ENCODE measurements at regions of chr2 and their contacts with region 1.

Region 1: DNA sequence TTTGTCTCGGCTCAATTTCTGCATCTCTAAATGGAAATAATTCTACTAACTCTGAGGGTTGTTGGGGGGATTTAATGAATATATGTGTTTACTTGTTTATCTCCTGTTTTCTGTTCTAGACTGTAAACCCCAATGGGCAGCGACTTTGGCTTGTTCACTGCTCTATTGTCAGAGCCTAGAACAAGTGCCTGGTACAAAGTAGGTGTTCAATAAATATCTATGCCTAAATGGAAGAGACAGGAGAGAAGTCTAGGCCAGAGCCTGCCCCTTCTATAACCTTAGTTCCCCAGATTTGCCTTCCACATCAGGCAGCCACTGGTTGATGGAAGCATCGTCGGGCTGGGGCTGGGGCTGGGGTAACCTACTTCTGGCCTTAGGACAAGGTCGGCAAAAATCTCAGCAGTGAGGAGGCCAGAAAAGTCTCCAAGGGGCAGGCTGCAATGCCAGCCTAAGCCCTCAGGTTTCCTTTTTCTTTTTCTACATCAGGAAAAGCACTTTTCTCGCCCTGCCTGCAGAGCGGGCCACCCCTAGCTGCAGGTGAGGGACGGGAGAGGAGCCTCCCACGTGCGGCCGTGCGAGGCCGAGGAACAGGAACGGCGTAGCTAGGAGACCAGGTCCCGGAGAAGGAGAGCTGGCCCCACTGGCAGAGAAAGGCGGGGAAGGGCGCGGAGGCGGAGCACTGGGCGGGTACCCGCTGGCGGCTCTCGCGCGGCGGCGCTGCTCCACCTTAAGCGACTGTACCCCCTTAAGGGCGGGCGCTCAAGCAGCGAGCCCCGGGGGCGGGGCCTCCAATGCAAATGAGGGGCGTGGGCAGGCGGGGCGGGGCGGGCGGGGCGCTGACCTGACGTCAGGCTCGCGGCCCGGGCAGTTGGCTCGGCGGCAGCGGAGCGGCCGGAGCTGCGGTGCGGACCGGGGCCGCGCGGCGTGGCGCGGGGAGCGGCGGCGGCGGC is at the start of gene CNNM4:
- DNase-seq: peak; percentile 85 to 93 (median 90)
- H3K4me3 ChIP-seq: peak within 1 kb of the TSS; percentile 91
- H3K4me3 Mint-ChIP-seq: peak within 1 kb of the TSS; percentile 86 to 94 (median 87)
- H3K27ac ChIP-seq: peak within 1 kb of the TSS; percentile 76
- H3K27ac Mint-ChIP-seq: peak within 1 kb of the TSS; percentile 85 to 96 (median 90)
- H3K4me1 ChIP-seq: peaks cover 53% of the 10 kb centered on the region
- H3K4me1 Mint-ChIP-seq: peaks cover 45 to 62% (median 54%) of the 10 kb centered on the region in 3 donors
- H3K27me3 ChIP-seq: no peaks in the 10 kb centered on the region
- H3K27me3 Mint-ChIP-seq: peaks cover 0 to 1% of the 10 kb centered on the region in 2 donors
- total RNA-seq, gene CNNM4: 6.9 to 7.2 TPM

Region 2: GRCh38 chr2:96739633-96740428 is 20.5 kb before region 1 on chr2 and contains the start of gene LMAN2L:
- CTCF ChIA-PET with region 1: interaction called, 11 read pairs
- POLR2A ChIA-PET with region 1: interaction called, 10 read pairs
- DNase-seq: peak; percentile 91 to 99 (median 96)
- H3K4me3 ChIP-seq: peak within 1 kb of the TSS; percentile 56
- H3K4me3 Mint-ChIP-seq: peak within 1 kb of the TSS; percentile 92 to 98 (median 96)
- H3K27ac ChIP-seq: peak within 1 kb of the TSS; percentile 82
- H3K27ac Mint-ChIP-seq: peak within 1 kb of the TSS; percentile 80 to 100 (median 96)
- H3K4me1 ChIP-seq: peaks cover 11% of the 10 kb centered on the region
- H3K4me1 Mint-ChIP-seq: peaks cover 32 to 53% (median 41%) of the 10 kb centered on the region in 3 donors
- H3K27me3 ChIP-seq: no peaks in the 10 kb centered on the region
- H3K27me3 Mint-ChIP-seq: peaks cover 0 to 1% of the 10 kb centered on the region in 2 donors
- total RNA-seq, gene LMAN2L: 9.4 to 9.9 TPM

Region 3: DNA sequence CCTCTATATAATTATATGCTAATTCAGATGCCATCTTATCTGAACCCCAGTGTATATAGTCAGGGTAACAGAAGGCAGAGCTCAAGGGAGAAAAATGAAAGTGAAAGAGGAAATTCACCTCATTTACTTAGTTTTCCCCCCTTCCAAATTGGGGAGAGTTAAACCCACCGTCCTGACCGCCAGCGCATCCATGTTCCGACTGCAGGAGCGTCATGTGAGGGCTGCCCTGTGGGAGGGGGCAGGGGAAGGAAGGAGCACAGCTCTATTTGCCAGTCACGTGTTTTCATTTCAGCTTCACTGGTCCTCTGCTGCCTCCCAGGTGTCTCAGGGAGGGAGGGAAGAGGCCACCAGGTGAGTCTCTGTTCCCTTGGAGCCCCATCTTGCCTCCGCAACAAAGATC is 13.6 kb after region 1 on chr2:
- CTCF ChIA-PET with region 1: interaction called, 36 read pairs
- POLR2A ChIA-PET with region 1: interaction called, 4 read pairs
- DNase-seq: peak; percentile 38 to 75 (median 63)
- H3K4me3 ChIP-seq: peak overlapping the region; percentile 59
- H3K4me3 Mint-ChIP-seq: peak overlapping the region; percentile 87 to 97 (median 93)
- H3K27ac ChIP-seq: peak overlapping the region; percentile 49
- H3K27ac Mint-ChIP-seq: peak overlapping the region; percentile 83 to 96 (median 94)
- H3K4me1 ChIP-seq: peaks cover 10% of the 10 kb centered on the region
- H3K4me1 Mint-ChIP-seq: peaks cover 25 to 36% (median 34%) of the 10 kb centered on the region in 3 donors
- H3K27me3 ChIP-seq: no peaks in the 10 kb centered on the region
- H3K27me3 Mint-ChIP-seq: peaks cover 0 to 2% of the 10 kb centered on the region in 2 donors

Region 4: DNA sequence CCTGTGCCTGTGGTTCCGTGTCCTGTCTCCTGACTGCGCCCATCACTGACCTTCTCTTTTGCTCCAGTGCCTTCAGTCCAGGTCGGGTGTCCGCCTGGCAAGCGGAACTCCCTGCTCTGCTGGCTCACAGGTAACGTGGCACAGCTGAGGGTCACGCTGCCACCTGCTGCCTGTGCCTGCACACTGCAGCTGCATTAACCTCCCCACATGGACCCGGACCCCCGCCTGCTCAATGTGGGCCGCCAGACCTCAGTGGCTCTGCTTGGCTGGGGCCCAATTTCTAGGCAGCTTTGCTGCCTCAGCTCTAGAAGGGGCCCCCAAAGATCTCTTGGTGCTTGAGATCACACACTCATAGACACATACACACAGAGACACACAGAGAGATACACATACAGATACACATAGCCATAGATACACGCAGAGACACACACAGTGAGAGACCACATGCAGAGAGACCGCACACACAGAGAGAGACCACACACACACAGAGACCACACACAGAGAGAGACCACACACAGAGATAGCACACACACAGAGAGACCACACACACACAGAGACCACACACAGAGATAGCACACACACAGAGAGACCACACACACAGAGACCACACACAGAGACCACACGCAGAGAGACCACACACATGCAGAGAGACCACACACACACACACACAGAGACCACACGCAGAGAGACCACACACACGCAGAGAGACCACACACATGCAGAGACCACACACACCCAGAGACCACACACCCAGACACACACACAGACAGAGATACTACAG is 40.9 kb after region 1 on chr2:
- CTCF ChIA-PET with region 1: interaction called, 21 read pairs
- POLR2A ChIA-PET with region 1: interaction called, 3 read pairs
- DNase-seq: peak; percentile 54 to 79 (median 59)
- H3K4me3 ChIP-seq: no peak overlapping the region
- H3K4me3 Mint-ChIP-seq: no peak overlapping the region
- H3K27ac ChIP-seq: no peak overlapping the region
- H3K27ac Mint-ChIP-seq: no peak overlapping the region
- H3K4me1 ChIP-seq: peaks cover 27% of the 10 kb centered on the region
- H3K4me1 Mint-ChIP-seq: peaks cover 3 to 10% (median 7%) of the 10 kb centered on the region in 3 donors
- H3K27me3 ChIP-seq: no peaks in the 10 kb centered on the region
- H3K27me3 Mint-ChIP-seq: no peaks in the 10 kb centered on the region

Region 5: GRCh38 chr2:96816128-96816835 is 56.0 kb after region 1 on chr2 and contains the start of gene CNNM3:
- CTCF ChIA-PET with region 1: interaction called, 14 read pairs
- POLR2A ChIA-PET with region 1: interaction called, 6 read pairs
- DNase-seq: peak; percentile 91 to 96 (median 94)
- H3K4me3 ChIP-seq: peak within 1 kb of the TSS; percentile 84
- H3K4me3 Mint-ChIP-seq: peak within 1 kb of the TSS; percentile 92 to 97 (median 96)
- H3K27ac ChIP-seq: peak within 1 kb of the TSS; percentile 69
- H3K27ac Mint-ChIP-seq: peak within 1 kb of the TSS; percentile 56 to 96 (median 94)
- H3K4me1 ChIP-seq: peaks cover 48% of the 10 kb centered on the region
- H3K4me1 Mint-ChIP-seq: peaks cover 60 to 76% (median 68%) of the 10 kb centered on the region in 3 donors
- H3K27me3 ChIP-seq: no peaks in the 10 kb centered on the region
- H3K27me3 Mint-ChIP-seq: peaks cover 0 to 1% of the 10 kb centered on the region in 2 donors
- total RNA-seq, gene CNNM3: 32.6 to 36.6 TPM

Region 6: GRCh38 chr2:96832754-96833507 is 72.6 kb after region 1 on chr2:
- CTCF ChIA-PET with region 1: no interaction called
- POLR2A ChIA-PET with region 1: no interaction called
- DNase-seq: no peak
- H3K4me3 ChIP-seq: no peak overlapping the region
- H3K4me3 Mint-ChIP-seq: no peak overlapping the region
- H3K27ac ChIP-seq: no peak overlapping the region
- H3K27ac Mint-ChIP-seq: peak overlapping the region in 3 of 8 donors; percentile 32 to 39 (median 36)
- H3K4me1 ChIP-seq: no peaks in the 10 kb centered on the region
- H3K4me1 Mint-ChIP-seq: peaks cover 0 to 4% (median 0%) of the 10 kb centered on the region in 3 donors
- H3K27me3 ChIP-seq: no peaks in the 10 kb centered on the region
- H3K27me3 Mint-ChIP-seq: no peaks in the 10 kb centered on the region

Region 7: DNA sequence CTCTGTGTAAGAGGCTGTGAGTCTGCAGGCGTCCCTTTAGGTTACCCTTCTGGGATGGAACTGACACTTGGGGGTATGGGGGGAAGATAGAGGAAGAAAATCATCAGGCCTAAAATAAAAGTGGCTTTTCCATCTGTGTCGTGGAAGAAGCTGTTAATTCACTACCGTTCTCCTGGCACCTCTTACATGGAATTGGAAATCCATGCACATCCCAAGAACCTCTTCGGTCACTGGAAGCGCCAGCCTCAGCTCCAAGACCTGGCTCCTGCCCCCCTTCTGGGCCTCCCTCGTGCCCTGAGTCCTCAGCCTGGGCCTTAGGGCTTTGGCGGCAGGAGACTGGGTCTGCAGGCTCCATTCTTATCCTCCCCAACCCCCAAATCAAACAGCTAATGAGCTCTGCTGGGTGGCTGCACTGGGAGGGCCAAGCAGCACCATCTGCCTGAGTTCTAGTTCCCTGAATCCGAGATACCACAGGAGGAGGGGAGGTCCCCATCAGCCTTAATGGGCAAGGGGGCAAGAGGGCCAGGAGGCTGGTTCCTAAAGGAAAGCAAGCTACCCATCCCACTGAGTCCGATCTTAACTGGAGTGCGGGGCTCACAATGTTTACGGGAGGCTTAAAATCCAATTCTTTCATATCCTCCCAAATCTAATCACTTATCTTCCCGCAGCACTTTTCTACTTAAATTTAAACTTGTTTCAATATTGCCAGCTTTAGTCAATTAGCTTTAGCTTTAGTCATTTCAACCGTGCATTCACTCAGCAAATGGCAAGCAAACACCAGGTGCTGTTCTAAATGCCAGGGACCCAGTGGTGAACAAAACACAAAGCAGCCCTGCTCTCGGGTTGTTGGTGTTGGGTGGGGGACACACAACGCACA is 173.2 kb after region 1 on chr2:
- CTCF ChIA-PET with region 1: no interaction called
- POLR2A ChIA-PET with region 1: no interaction called
- DNase-seq: peak in 1 of 5 donors; percentile 25
- H3K4me3 ChIP-seq: no peak overlapping the region
- H3K4me3 Mint-ChIP-seq: no peak overlapping the region
- H3K27ac ChIP-seq: no peak overlapping the region
- H3K27ac Mint-ChIP-seq: no peak overlapping the region
- H3K4me1 ChIP-seq: no peaks in the 10 kb centered on the region
- H3K4me1 Mint-ChIP-seq: peaks cover 8 to 9% (median 9%) of the 10 kb centered on the region in 3 donors
- H3K27me3 ChIP-seq: no peaks in the 10 kb centered on the region
- H3K27me3 Mint-ChIP-seq: peaks cover 0 to 2% of the 10 kb centered on the region in 2 donors

Measured in CD8-positive, alpha-beta memory T cell (primary cell).